Activated CD4-positive, alpha-beta T cell treated with anti-CD3 and anti-CD28 coated beads for 36 hours (primary cell): ENCODE measurements at regions of chr3 and their contacts with region 1.

Region 1: DNA sequence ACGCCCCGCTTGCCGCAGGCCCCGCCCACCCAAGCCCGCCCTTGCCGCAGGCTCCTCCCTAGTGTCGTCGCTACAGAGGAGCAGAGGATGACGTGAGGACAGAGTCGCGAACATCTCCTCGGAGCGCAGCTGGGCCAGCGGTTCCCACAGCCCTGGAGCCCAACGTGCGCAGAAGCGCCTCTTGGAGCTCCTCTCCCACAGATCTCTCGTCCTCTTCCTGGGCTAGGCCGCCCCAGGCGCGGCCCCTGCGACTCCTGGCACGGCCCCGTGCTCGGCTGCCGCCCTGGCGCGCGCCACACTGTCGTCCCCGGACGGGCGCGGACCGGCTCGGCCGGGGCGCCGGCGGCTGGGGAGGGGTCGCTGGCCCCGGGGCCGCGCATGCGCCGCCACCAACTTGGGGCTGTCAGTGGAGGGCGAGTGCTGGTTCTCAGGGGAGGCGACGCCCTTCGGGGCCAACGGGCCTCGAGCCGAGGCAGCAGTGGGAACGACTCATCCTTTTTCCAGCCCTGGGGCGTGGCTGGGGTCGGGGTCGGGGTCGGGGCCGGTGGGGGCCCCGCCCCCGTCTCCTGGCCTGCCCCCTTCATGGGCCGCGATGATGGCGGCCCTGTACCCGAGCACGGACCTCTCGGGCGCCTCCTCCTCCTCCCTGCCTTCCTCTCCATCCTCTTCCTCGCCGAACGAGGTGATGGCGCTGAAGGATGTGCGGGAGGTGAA is at the start of gene TRPC1:
- DNase-seq: peak; percentile 87
- ATAC-seq: peak; percentile 95
- H3K4me3 Mint-ChIP-seq: peak within 1 kb of the TSS; percentile 82
- H3K27ac Mint-ChIP-seq: peak within 1 kb of the TSS; percentile 87
- H3K4me1 Mint-ChIP-seq: peaks cover 11% of the 10 kb centered on the region
- H3K27me3 Mint-ChIP-seq: peaks cover 37% of the 10 kb centered on the region
- total RNA-seq, gene TRPC1: 4.7 to 6.2 TPM

Region 2: DNA sequence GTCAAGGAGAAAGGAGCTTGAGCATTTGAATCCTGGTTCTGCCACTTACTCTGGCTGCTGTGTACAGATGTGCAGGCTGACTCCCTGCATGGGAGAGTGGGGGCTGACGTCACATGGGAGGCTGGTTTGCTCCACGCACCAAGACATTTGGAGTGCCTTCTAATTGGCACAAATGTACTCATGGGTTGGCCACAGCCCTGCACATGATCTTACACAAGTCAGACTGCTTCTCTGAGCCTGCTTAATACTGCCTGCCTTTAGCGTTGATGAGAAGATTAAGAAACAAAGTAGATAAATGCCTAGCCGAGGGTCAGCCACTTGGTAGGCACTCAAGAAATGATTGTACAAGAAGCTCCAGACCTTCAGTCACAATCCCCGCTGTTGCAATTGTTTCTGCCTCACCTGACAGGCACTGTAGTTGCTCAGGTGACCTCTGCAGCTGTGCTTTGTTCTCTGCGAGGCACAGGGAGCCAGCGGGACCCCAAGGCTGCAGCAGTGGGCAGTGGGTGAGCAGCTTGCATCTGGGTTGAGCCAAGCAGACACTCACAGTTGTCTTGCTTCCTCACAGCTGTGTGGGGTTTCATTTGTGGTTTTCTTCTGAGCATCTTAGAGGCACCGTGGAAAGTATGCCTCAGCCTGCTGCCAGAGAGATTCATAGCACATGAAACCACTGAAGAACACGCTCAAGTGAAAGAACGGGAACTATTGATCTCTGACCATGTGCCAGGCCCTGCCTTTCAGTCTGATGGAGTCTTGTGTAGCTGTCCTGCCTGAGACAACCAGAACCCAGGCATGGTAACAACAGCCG is 927.8 kb before region 1 on chr3:
- CTCF ChIA-PET with region 1: no interaction called
- POLR2A ChIA-PET with region 1: no interaction called
- intact Hi-C with region 1: loop called in 1 of 2 experiments (anchors 2 kb)
- DNase-seq: peak; percentile 90
- ATAC-seq: peak; percentile 84
- H3K4me3 Mint-ChIP-seq: peak overlapping the region; percentile 77
- H3K27ac Mint-ChIP-seq: peak overlapping the region; percentile 97
- H3K4me1 Mint-ChIP-seq: peaks cover 52% of the 10 kb centered on the region
- H3K27me3 Mint-ChIP-seq: no peaks in the 10 kb centered on the region

Region 3: GRCh38 chr3:142148792-142149672 is 575.1 kb before region 1 on chr3 and contains the start of gene TFDP2:
- CTCF ChIA-PET with region 1: no interaction called
- POLR2A ChIA-PET with region 1: no interaction called
- intact Hi-C with region 1: loop called in 1 of 2 experiments (anchors 5 kb)
- DNase-seq: peak; percentile 92
- ATAC-seq: peak; percentile 100
- H3K4me3 Mint-ChIP-seq: peak within 1 kb of the TSS; percentile 86
- H3K27ac Mint-ChIP-seq: peak within 1 kb of the TSS; percentile 89
- H3K4me1 Mint-ChIP-seq: peaks cover 26% of the 10 kb centered on the region
- H3K27me3 Mint-ChIP-seq: no peaks in the 10 kb centered on the region
- total RNA-seq, gene TFDP2: 23.3 to 40.7 TPM

Region 4: GRCh38 chr3:142226484-142226883 is 497.6 kb before region 1 on chr3:
- CTCF ChIA-PET with region 1: no interaction called
- POLR2A ChIA-PET with region 1: no interaction called
- intact Hi-C with region 1: loop called in 1 of 2 experiments (anchors 1 kb)
- DNase-seq: no peak
- ATAC-seq: no peak
- H3K4me3 Mint-ChIP-seq: peak overlapping the region; percentile 82
- H3K27ac Mint-ChIP-seq: no peak overlapping the region
- H3K4me1 Mint-ChIP-seq: peaks cover 13% of the 10 kb centered on the region
- H3K27me3 Mint-ChIP-seq: no peaks in the 10 kb centered on the region

Region 5: GRCh38 chr3:142489557-142490323 is 234.4 kb before region 1 on chr3:
- CTCF ChIA-PET with region 1: no interaction called
- POLR2A ChIA-PET with region 1: no interaction called
- intact Hi-C with region 1: no loop called
- DNase-seq: no peak
- ATAC-seq: no peak
- H3K4me3 Mint-ChIP-seq: no peak overlapping the region
- H3K27ac Mint-ChIP-seq: no peak overlapping the region
- H3K4me1 Mint-ChIP-seq: peaks cover 7% of the 10 kb centered on the region
- H3K27me3 Mint-ChIP-seq: no peaks in the 10 kb centered on the region

Region 6: GRCh38 chr3:142578327-142579223 is 145.6 kb before region 1 on chr3 and contains the start of gene ATR:
- CTCF ChIA-PET with region 1: interaction called, 3 read pairs
- POLR2A ChIA-PET with region 1: interaction called, 4 read pairs
- intact Hi-C with region 1: loop called (anchors 1 to 5 kb)
- DNase-seq: peak; percentile 98
- ATAC-seq: peak; percentile 96
- H3K4me3 Mint-ChIP-seq: peak within 1 kb of the TSS; percentile 97
- H3K27ac Mint-ChIP-seq: peak within 1 kb of the TSS; percentile 99
- H3K4me1 Mint-ChIP-seq: peaks cover 43% of the 10 kb centered on the region
- H3K27me3 Mint-ChIP-seq: no peaks in the 10 kb centered on the region
- total RNA-seq, gene ATR: 36.1 to 39.9 TPM

Region 7: DNA sequence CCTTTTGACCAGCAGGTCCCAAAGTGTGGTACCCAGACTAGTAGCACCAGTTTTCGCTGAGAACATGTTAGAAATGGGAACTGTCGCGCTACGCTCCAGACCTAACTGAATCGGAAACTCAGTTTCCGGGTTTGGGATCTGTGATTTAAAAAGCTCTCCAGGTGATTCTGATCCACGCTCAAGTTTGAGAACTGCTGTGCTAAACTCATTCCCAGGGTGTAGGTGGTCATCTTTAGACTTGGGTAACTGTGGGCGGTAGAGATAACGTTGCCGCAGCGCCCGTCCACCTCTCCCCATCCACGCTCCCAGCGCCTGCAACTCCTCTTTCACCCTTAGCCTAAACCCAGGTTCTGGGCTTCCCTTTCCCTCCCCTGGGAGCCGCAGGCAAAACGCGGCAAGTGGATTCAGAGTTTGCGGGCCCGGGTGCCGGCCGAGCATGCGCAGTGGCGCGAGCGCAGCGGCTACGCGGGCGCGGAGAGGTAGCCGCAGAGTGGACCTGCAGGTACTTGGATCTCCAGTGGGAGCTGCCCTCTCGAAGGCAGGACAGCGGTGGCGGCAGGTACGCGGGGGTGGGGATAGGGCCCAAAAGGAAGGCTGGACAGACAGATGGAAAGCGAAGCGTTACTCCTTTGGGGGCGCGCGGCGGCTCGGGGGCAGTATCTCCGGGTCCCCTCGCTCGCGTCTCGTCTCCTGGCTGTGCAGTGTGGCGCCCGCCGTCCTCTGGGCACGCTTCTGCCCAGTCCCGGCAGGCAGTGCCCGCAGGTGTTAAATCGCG is 128.0 kb before region 1 on chr3 and contains the start of gene PLS1:
- CTCF ChIA-PET with region 1: interaction called, 5 read pairs
- POLR2A ChIA-PET with region 1: no interaction called
- intact Hi-C with region 1: loop called (anchors 1 to 2 kb)
- DNase-seq: peak; percentile 88
- ATAC-seq: peak; percentile 87
- H3K4me3 Mint-ChIP-seq: peak within 1 kb of the TSS; percentile 92
- H3K27ac Mint-ChIP-seq: peak within 1 kb of the TSS; percentile 90
- H3K4me1 Mint-ChIP-seq: peaks cover 16% of the 10 kb centered on the region
- H3K27me3 Mint-ChIP-seq: no peaks in the 10 kb centered on the region
- total RNA-seq, gene PLS1: 5.1 to 5.4 TPM

Region 8: DNA sequence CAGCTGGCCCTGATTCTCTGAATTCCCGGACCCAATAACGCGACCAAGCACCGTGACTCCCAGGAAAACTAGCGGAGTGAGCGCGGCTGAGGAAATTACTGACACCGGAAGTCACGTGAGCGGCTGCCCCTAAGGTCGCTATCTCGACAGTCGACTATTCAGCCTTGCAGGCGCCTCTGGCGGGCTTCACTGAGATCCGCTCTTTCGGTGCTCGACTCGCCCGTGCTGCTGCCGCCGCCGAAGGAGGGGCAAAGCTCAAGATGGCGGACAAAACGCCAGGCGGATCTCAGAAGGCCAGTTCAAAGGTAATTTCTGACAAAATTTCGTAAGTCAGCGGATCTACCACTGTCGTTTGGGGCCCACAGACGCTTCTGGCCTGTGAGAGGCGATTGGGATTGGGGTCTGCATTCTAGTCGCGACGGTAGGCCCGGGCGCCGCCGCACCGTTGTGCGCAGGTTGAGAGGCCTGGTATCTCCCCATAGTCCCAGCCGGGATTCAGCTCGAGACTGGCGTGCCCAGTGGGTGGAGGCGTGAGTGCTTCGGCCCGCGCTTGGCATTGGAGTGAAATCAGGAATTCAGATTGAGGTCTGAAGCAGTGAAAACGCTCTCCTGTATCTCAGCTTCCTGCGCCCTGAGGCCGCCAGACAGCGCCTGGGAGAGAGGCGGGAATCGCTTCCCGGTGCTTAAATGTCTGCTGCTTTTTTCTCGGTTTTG is 277.4 kb after region 1 on chr3 and contains the start of gene U2SURP:
- CTCF ChIA-PET with region 1: no interaction called
- POLR2A ChIA-PET with region 1: no interaction called
- intact Hi-C with region 1: loop called (anchors 1 kb)
- DNase-seq: peak; percentile 96
- ATAC-seq: peak; percentile 86
- H3K4me3 Mint-ChIP-seq: peak within 1 kb of the TSS; percentile 91
- H3K27ac Mint-ChIP-seq: peak within 1 kb of the TSS; percentile 99
- H3K4me1 Mint-ChIP-seq: peaks cover 40% of the 10 kb centered on the region
- H3K27me3 Mint-ChIP-seq: no peaks in the 10 kb centered on the region
- total RNA-seq, gene U2SURP: 208 to 248 TPM